ENCODE measurements at regions of chr1 and their contacts with region 1.

Region 1: DNA sequence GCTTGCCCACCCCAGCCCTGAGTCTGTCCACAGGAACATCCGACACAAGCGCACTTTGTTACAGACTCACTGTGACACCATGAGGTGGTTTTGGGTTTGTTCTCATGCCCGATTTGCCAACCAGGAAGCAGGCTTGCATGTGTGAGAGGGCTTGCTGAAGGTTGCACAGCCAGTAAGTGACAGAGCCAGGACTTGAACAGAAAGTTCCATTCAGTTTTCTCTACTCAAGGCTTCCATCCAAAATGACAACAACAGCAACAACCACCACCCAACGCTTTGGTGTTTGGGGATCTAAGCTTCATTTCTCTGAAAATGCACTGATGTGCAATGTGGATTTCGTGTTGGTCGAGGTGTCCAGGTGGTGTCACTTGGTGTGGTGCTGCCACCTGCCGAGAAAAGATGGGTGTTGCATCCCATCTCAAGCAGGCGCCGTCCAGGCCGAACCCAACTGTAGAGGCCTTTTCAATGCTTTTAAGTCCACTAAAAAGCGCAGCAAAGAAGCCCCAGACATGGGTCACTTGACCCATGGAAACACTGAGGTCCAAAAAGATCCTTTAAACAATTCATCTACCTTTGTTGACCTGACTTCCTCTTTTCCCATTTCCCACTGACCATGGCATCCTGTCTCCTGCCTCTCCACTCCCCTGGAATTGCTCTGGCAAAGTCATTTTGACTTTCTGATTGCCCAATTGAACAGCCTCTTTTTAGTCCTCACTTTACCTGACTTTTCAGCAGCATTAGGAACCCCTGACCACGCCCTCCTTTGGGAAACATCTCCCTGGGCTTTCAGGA is 12.2 kb downstream of the CITED4 start:
- DNase-seq: peak; percentile 88
- ATAC-seq: peak; percentile 90
- H3K4me3 Mint-ChIP-seq: no peak overlapping the region
- H3K27ac Mint-ChIP-seq: no peak overlapping the region
- H3K4me1 Mint-ChIP-seq: peaks cover 10% of the 10 kb centered on the region
- H3K27me3 Mint-ChIP-seq: no peaks in the 10 kb centered on the region

Region 2: GRCh38 chr1:40612345-40612831 is 237.6 kb before region 1 on chr1:
- CTCF ChIA-PET with region 1: interaction called, 7 read pairs
- POLR2A ChIA-PET with region 1: no interaction called
- intact Hi-C with region 1: loop called (anchors 1 kb)
- DNase-seq: peak; percentile 84
- ATAC-seq: peak; percentile 97
- H3K4me3 Mint-ChIP-seq: no peak overlapping the region
- H3K27ac Mint-ChIP-seq: no peak overlapping the region
- H3K4me1 Mint-ChIP-seq: no peaks in the 10 kb centered on the region
- H3K27me3 Mint-ChIP-seq: no peaks in the 10 kb centered on the region

Region 3: DNA sequence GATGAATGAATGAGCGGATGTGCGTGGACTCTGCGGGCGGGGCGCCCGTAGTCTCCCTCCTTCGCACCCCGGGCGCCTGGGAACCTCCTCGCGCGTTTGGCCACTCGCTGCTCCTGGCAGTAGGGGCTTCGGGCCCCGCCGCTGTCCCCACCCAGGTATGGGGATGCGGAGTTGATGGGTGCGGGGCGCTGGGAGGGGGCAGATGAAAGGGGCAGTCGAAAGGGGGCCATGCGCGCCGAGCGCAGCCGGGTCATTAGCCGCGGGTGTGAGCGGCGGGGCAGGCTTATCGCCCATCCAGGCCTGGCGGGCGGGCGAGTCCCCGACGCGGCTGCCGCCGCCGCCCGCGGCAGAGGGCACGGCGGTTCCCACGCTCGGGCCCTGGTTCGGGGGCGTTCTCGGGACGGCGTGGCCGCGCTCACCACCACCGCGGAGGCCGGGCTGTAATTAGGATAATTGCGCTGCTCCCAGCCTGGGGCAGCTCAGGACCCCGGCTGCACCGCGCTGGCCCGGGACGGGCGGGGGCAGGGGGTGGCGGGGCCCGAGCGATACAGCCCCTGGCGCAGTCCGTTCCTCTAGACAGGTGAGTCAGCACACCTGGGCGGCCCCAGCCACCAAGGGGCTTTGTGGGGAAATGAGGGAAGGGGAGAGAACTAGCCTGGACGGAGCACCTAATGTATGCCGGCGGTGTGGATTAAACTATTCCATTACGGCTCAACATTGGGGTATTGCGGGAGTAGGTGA is 34.2 kb after region 1 on chr1:
- CTCF ChIA-PET with region 1: no interaction called
- POLR2A ChIA-PET with region 1: no interaction called
- intact Hi-C with region 1: no loop called
- DNase-seq: peak; percentile 22
- ATAC-seq: no peak
- H3K4me3 Mint-ChIP-seq: no peak overlapping the region
- H3K27ac Mint-ChIP-seq: no peak overlapping the region
- H3K4me1 Mint-ChIP-seq: peaks cover 4% of the 10 kb centered on the region
- H3K27me3 Mint-ChIP-seq: peaks cover 32% of the 10 kb centered on the region

Region 4: DNA sequence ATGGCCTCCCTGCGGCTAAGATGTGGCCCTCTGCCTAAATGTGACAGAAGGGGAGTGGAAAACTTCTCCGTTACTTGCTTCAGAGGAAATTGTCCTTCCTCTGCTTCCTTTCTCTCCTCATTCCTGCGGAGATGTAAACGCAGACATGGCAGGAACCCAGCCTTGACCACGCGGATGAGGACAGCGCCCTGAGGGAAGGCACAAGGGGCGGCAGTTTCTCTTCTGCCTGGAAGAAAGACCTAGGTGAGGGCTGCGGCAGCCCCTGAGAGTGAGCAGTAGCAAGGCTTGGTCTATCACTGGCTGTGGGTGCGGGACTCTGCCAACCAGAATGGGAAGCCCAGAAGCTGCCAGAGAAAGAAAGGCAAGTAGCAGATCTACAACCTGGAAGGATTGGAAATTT is 115.5 kb after region 1 on chr1:
- CTCF ChIA-PET with region 1: no interaction called
- POLR2A ChIA-PET with region 1: no interaction called
- intact Hi-C with region 1: no loop called
- DNase-seq: no peak
- ATAC-seq: no peak
- H3K4me3 Mint-ChIP-seq: no peak overlapping the region
- H3K27ac Mint-ChIP-seq: no peak overlapping the region
- H3K4me1 Mint-ChIP-seq: no peaks in the 10 kb centered on the region
- H3K27me3 Mint-ChIP-seq: no peaks in the 10 kb centered on the region

Measured in activated CD4-positive, alpha-beta T cell treated with anti-CD3 and anti-CD28 coated beads for 36 hours (primary cell).